Mammary epithelial cell (primary cell): ENCODE measurements at regions of chr17 and their contacts with region 1.

Region 1: GRCh38 chr17:27760069-27760885 is 40.1 kb downstream of the NOS2 start:
- DNase-seq: peak; percentile 19
- H3K4me3 ChIP-seq: no peak overlapping the region
- H3K27ac ChIP-seq: no peak overlapping the region
- H3K4me1 ChIP-seq: no peaks in the 10 kb centered on the region
- H3K27me3 ChIP-seq: no peaks in the 10 kb centered on the region
- CTCF ChIP-seq: peak; percentile 60 to 84

Region 2: GRCh38 chr17:27692766-27693165 is 67.5 kb before region 1 on chr17:
- CTCF ChIA-PET with region 1: no interaction called
- dilution Hi-C with region 1: no loop called
- in situ Hi-C with region 1: no loop called
- intact Hi-C with region 1: no loop called
- DNase-seq: no peak
- H3K4me3 ChIP-seq: no peak overlapping the region
- H3K27ac ChIP-seq: no peak overlapping the region
- H3K4me1 ChIP-seq: no peaks in the 10 kb centered on the region
- H3K27me3 ChIP-seq: peaks cover 2% of the 10 kb centered on the region
- CTCF ChIP-seq: no peak

Region 3: DNA sequence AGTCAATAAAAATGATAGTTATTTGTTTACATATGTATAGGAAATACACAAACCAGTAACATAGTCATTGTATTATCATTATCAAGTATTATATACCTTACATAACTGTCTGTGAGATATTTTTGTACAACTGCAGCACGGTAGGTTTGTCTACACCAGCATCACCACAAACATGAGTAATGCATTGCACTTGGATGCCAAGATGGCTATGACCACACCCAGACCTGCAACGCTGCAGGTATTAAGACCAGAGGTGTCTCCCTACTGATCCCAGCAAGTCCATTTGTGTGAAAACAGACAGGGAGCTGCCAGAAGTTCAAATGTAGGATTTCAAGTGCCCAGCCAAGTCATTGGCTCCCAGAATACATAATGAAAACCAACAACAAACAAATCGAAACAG is 74.3 kb after region 1 on chr17:
- CTCF ChIA-PET with region 1: no interaction called
- dilution Hi-C with region 1: no loop called
- in situ Hi-C with region 1: no loop called
- intact Hi-C with region 1: no loop called
- DNase-seq: peak; percentile 76
- H3K4me3 ChIP-seq: no peak overlapping the region
- H3K27ac ChIP-seq: no peak overlapping the region
- H3K4me1 ChIP-seq: peaks cover 14% of the 10 kb centered on the region
- H3K27me3 ChIP-seq: no peaks in the 10 kb centered on the region
- CTCF ChIP-seq: no peak

Region 4: GRCh38 chr17:27944546-27945332 is 184.5 kb after region 1 on chr17:
- CTCF ChIA-PET with region 1: no interaction called
- dilution Hi-C with region 1: no loop called
- in situ Hi-C with region 1: no loop called
- intact Hi-C with region 1: no loop called
- DNase-seq: peak; percentile 16
- H3K4me3 ChIP-seq: no peak overlapping the region
- H3K27ac ChIP-seq: no peak overlapping the region
- H3K4me1 ChIP-seq: peaks cover 7% of the 10 kb centered on the region
- H3K27me3 ChIP-seq: no peaks in the 10 kb centered on the region
- CTCF ChIP-seq: no peak

Region 5: GRCh38 chr17:28097901-28098300 is 337.6 kb after region 1 on chr17:
- CTCF ChIA-PET with region 1: no interaction called
- dilution Hi-C with region 1: no loop called
- in situ Hi-C with region 1: no loop called
- intact Hi-C with region 1: no loop called
- DNase-seq: no peak
- H3K4me3 ChIP-seq: no peak overlapping the region
- H3K27ac ChIP-seq: no peak overlapping the region
- H3K4me1 ChIP-seq: no peaks in the 10 kb centered on the region
- H3K27me3 ChIP-seq: no peaks in the 10 kb centered on the region
- CTCF ChIP-seq: no peak

Region 6: GRCh38 chr17:28252436-28252835 is 492.2 kb after region 1 on chr17:
- CTCF ChIA-PET with region 1: no interaction called
- dilution Hi-C with region 1: no loop called
- in situ Hi-C with region 1: no loop called
- intact Hi-C with region 1: loop called (anchors 5 kb)
- DNase-seq: peak; percentile 83
- H3K4me3 ChIP-seq: no peak overlapping the region
- H3K27ac ChIP-seq: no peak overlapping the region
- H3K4me1 ChIP-seq: peaks cover 15% of the 10 kb centered on the region
- H3K27me3 ChIP-seq: no peaks in the 10 kb centered on the region
- CTCF ChIP-seq: no peak